IMR-90 (cell line): ENCODE measurements at regions of chr2 and their contacts with region 1.

Region 1: DNA sequence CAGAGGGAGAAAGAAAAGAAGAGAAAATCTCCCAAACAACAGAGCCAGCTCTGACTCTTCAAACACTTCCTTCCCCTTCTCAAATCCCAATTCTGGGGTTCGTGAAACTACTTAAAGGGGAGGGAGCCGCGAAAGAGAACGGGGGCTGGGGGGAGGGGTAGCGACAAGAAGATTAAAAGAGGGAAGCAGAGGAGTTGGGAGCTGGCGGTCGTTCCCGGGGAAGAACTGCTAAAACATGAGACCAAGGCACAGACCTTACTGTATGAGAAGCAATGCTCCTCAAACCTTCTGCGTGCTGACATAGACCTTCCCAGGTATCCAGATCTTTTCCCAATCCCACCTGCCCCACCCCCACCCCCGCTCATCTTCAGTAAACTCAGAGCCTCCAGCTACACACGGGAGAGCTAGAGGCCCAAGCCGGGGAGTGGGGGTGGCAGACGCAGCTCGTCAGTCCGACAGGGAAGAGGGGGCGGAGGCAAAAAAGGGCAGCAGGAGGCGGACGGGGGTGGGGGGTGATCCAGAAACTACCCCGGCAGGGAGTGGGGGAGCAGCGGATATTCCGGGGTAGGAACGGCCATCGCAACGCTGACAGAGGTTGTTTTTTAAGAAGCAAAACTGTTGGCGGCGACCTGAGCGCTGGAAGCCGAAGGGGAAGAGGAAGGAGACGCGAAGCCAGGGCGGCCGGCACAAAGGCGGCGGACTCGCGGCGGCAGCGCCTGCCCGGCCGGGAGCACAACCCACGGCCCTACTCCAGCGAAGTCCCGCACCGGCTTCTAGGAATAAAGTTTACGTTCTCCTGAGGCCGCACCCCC is 1.0 kb downstream of the BAZ2B start:
- DNase-seq: peak; percentile 91
- ATAC-seq: peak; percentile 90
- H3K4me3 ChIP-seq: peak overlapping the region; percentile 88
- H3K27ac ChIP-seq: peak overlapping the region; percentile 98
- H3K4me1 ChIP-seq: no peaks in the 10 kb centered on the region; the same call in 1 of the 2 replicates
- H3K27me3 ChIP-seq: no peaks in the 10 kb centered on the region
- CTCF ChIP-seq: no peak
- POLR2A ChIP-seq: peak; percentile 64; the same call in 1 of the 2 replicates
- RAD21 ChIP-seq: no peak

Region 2: GRCh38 chr2:159131914-159132281 is 483.4 kb before region 1 on chr2:
- CTCF ChIA-PET with region 1: no interaction called
- POLR2A ChIA-PET with region 1: no interaction called
- dilution Hi-C with region 1: no loop called
- in situ Hi-C with region 1: no loop called
- intact Hi-C with region 1: loop called (anchors 10 kb)
- DNase-seq: peak; percentile 97
- ATAC-seq: peak; percentile 54
- H3K4me3 ChIP-seq: no peak overlapping the region
- H3K27ac ChIP-seq: peak overlapping the region; percentile 87; the same call in 1 of the 2 replicates
- H3K4me1 ChIP-seq: peaks cover 27% of the 10 kb centered on the region
- H3K27me3 ChIP-seq: no peaks in the 10 kb centered on the region
- CTCF ChIP-seq: no peak
- POLR2A ChIP-seq: no peak
- RAD21 ChIP-seq: peak; percentile 22; the same call in 1 of the 2 replicates

Region 3: DNA sequence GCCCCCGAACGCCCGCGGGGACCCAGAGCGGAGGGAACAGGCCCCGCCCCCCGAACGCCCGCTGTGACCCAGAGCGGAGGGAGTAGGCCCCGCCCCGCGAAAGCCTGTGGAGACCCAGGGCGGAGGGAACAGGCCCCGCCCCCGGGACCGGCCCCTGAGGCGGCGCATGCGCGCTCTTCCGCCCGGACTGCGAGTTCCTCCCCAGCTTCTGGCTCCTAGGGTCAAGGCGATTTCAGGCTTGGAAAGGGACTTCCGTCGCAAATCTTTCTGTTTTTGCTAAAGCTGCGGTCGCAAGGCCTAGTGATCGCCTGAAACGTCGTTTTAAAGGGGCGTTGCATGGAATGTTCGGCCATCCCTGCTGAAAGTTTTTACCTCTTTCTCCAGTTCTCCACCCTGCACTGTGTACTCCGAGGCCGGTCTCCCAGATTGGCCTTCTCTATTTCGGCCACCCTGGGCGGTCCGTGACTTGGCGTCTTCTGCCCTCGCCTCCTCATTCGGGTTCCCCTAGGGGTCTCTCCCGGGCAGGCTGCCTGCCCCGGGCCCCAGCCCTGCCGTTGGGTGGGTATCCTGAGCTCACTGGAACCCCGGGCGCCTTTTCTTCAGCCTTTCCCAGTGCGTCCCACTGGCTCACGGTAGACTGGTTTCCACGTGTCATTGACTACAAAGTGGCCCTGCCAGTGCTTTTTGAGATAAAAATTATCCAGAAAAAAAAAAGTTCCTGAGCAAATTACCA is 328.5 kb before region 1 on chr2:
- CTCF ChIA-PET with region 1: no interaction called
- POLR2A ChIA-PET with region 1: interaction called, 17 read pairs
- dilution Hi-C with region 1: no loop called
- in situ Hi-C with region 1: no loop called
- intact Hi-C with region 1: no loop called
- DNase-seq: peak; percentile 89
- ATAC-seq: peak; percentile 99
- H3K4me3 ChIP-seq: peak overlapping the region; percentile 59
- H3K27ac ChIP-seq: peak overlapping the region; percentile 92
- H3K4me1 ChIP-seq: peaks cover 5% of the 10 kb centered on the region
- H3K27me3 ChIP-seq: no peaks in the 10 kb centered on the region
- CTCF ChIP-seq: no peak
- POLR2A ChIP-seq: no peak
- RAD21 ChIP-seq: no peak

Region 4: GRCh38 chr2:159776321-159776720 is 161.0 kb after region 1 on chr2:
- CTCF ChIA-PET with region 1: no interaction called
- POLR2A ChIA-PET with region 1: interaction called, 12 read pairs
- dilution Hi-C with region 1: no loop called
- in situ Hi-C with region 1: no loop called
- intact Hi-C with region 1: no loop called
- DNase-seq: no peak
- ATAC-seq: no peak
- H3K4me3 ChIP-seq: no peak overlapping the region
- H3K27ac ChIP-seq: no peak overlapping the region
- H3K4me1 ChIP-seq: peaks cover 3% of the 10 kb centered on the region; the same call in 1 of the 2 replicates
- H3K27me3 ChIP-seq: no peaks in the 10 kb centered on the region
- CTCF ChIP-seq: peak; percentile 28; the same call in 1 of the 2 replicates
- POLR2A ChIP-seq: no peak
- RAD21 ChIP-seq: no peak